CD4-positive, alpha-beta T cell (primary cell): ENCODE measurements at regions of chr17 and their contacts with region 1.

Region 1: GRCh38 chr17:70636517-70637133 is 467.3 kb downstream of the KCNJ2 start:
- DNase-seq: peak in 3 of 14 experiments; percentile 5 to 37 (median 21)
- ATAC-seq: no peak
- H3K4me3 ChIP-seq: no peak overlapping the region
- H3K4me3 Mint-ChIP-seq: no peak overlapping the region
- H3K27ac ChIP-seq: no peak overlapping the region
- H3K27ac Mint-ChIP-seq: no peak overlapping the region
- H3K4me1 ChIP-seq: no peaks in the 10 kb centered on the region
- H3K4me1 Mint-ChIP-seq: no peaks in the 10 kb centered on the region
- H3K27me3 ChIP-seq: no peaks in the 10 kb centered on the region
- H3K27me3 Mint-ChIP-seq: peaks cover 7% of the 10 kb centered on the region
- CTCF ChIP-seq: peak; percentile 71

Region 2: GRCh38 chr17:70468661-70469060 is 168.0 kb before region 1 on chr17:
- CTCF ChIA-PET with region 1: no interaction called
- POLR2A ChIA-PET with region 1: no interaction called
- intact Hi-C with region 1: no loop called
- DNase-seq: no peak
- ATAC-seq: no peak
- H3K4me3 ChIP-seq: no peak overlapping the region
- H3K4me3 Mint-ChIP-seq: no peak overlapping the region
- H3K27ac ChIP-seq: no peak overlapping the region
- H3K27ac Mint-ChIP-seq: no peak overlapping the region
- H3K4me1 ChIP-seq: no peaks in the 10 kb centered on the region
- H3K4me1 Mint-ChIP-seq: no peaks in the 10 kb centered on the region
- H3K27me3 ChIP-seq: no peaks in the 10 kb centered on the region
- H3K27me3 Mint-ChIP-seq: no peaks in the 10 kb centered on the region
- CTCF ChIP-seq: no peak

Region 3: DNA sequence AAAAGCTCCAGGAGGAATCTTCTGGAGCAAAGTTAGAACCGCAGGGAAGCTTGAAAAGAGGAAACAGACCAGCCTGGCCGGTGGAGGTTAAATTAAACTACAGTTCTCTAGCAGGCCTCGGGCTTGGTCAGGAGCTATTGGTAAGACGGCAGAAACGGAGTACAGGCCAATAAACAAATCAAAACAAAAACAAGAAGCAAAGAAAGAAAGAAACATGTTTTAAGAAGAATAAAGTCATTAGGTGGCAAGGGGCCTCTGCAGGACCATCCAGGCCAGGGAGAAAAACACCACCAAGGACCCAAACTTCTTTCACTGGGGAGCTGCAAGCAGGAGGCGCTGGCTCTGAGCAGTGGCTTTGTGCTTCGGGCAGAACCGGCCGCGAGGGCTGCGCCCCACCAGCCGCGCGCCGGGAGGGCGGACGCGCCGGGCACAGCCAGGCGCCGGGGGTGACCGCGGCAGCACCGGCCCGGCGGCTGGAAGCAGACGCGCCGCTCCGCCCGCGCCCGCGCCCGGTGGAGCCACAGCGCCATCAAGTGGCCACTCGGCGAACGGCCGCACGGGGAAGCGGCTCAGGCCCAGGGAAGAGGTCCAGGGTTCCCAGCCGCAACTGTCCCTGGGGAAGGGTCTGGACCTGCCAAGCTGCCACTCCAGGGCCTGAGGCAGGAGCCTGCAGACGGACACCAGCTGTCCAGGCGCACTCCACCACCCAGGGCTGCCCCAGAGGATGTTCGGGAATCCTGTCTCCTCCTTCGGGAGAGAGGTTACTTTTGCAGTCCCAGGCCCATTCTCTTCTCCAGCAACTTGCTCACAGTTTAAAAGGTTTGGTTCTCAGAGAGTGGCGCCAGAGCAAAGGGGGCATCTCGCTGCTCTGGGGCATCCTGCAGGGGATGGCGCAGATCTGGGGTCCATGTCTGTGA is 1903.6 kb after region 1 on chr17:
- CTCF ChIA-PET with region 1: no interaction called
- POLR2A ChIA-PET with region 1: no interaction called
- intact Hi-C with region 1: loop called in 1 of 2 experiments (anchors 5 kb)
- DNase-seq: peak in 13 of 14 experiments; percentile 20 to 68 (median 42)
- ATAC-seq: peak; percentile 55
- H3K4me3 ChIP-seq: no peak overlapping the region
- H3K4me3 Mint-ChIP-seq: no peak overlapping the region
- H3K27ac ChIP-seq: no peak overlapping the region
- H3K27ac Mint-ChIP-seq: no peak overlapping the region
- H3K4me1 ChIP-seq: peaks cover 3% of the 10 kb centered on the region
- H3K4me1 Mint-ChIP-seq: peaks cover 4% of the 10 kb centered on the region
- H3K27me3 ChIP-seq: peaks cover 9 to 13% of the 10 kb centered on the region in 2 experiments
- H3K27me3 Mint-ChIP-seq: peaks cover 48% of the 10 kb centered on the region
- CTCF ChIP-seq: peak; percentile 48